ENCODE measurements at regions of chr20 and their contacts with region 1.

Region 1: DNA sequence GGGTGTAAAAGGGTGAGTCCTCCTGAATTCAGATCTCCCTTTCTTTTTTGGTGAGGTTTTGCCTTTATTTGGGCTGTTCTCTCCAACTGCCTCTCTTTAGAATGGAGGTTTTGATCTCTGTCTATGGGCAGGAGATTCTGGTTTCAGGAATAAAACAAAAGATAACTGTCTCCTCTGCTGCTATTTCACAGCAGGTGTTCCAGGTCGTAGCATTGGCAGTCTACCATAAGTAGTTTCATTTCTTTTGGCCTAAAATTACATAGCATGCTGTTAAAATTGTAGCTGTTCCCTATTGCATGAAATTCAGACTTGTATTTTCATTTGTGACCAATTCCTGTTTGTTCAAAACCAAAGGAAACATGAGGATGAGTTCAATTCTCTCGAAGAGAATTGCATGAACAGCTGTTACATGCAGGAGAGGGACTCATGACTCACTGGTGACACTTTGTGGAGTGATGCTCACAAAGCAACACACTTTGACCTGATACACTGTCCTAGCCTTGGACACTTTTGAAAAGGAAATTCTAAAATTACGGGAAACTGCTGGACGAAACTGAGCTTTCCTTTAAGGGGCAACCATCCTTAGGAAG is 76.8 kb upstream of the SIRPG start:
- DNase-seq: peak in 6 of 9 experiments; percentile 7 to 74 (median 36)
- ATAC-seq: peak; percentile 63
- H3K4me3 ChIP-seq: no peak overlapping the region
- H3K4me3 Mint-ChIP-seq: no peak overlapping the region
- H3K27ac ChIP-seq: no peak overlapping the region
- H3K27ac Mint-ChIP-seq: peak overlapping the region; percentile 75
- H3K4me1 ChIP-seq: peaks cover 31% of the 10 kb centered on the region
- H3K4me1 Mint-ChIP-seq: peaks cover 4% of the 10 kb centered on the region
- H3K27me3 ChIP-seq: no peaks in the 10 kb centered on the region
- H3K27me3 Mint-ChIP-seq: no peaks in the 10 kb centered on the region
- CTCF ChIP-seq: peak; percentile 50

Region 2: DNA sequence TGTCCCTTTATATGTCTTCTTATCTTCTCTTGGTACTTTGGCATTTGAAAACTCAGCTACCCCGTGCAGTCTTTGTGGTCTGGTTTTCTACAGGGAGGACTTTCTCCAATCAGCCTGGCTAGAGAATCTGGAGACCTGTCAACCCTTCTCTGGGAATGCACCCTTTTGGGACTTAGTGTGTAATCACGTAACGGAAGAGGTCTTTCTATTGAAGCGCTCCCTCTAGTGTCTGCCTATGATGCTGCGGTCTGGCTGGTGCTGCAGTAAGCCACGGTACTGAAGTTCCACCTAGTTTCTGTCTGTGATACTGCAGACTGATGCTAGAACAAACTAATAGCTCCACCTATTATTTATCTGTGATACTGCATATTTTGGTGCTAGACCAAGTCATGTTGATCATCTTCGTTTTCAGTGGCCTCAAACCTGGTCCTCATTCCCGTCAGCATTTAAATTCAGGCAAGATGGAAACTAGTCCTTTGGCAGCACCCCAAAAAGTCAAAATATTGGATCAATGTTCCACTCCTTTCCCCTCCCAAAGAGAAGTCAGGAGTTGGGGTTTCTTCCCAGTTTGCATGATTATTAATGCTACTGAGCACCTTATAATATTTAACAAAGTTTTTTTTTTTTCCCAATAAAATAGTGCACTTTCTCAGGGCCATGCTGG is 230.7 kb before region 1 on chr20:
- CTCF ChIA-PET with region 1: interaction called, 62 read pairs
- POLR2A ChIA-PET with region 1: no interaction called
- intact Hi-C with region 1: no loop called
- DNase-seq: peak; percentile 54 to 91 (median 73)
- ATAC-seq: peak; percentile 100
- H3K4me3 ChIP-seq: no peak overlapping the region
- H3K4me3 Mint-ChIP-seq: no peak overlapping the region
- H3K27ac ChIP-seq: no peak overlapping the region
- H3K27ac Mint-ChIP-seq: no peak overlapping the region
- H3K4me1 ChIP-seq: peaks cover 3% of the 10 kb centered on the region
- H3K4me1 Mint-ChIP-seq: peaks cover 5% of the 10 kb centered on the region
- H3K27me3 ChIP-seq: no peaks in the 10 kb centered on the region
- H3K27me3 Mint-ChIP-seq: peaks cover 30% of the 10 kb centered on the region
- CTCF ChIP-seq: peak; percentile 99

Region 3: GRCh38 chr20:1535420-1536175 is 198.8 kb before region 1 on chr20:
- CTCF ChIA-PET with region 1: interaction called, 29 read pairs
- POLR2A ChIA-PET with region 1: no interaction called
- intact Hi-C with region 1: loop called in 1 of 2 experiments (anchors 1 kb)
- DNase-seq: no peak
- ATAC-seq: no peak
- H3K4me3 ChIP-seq: no peak overlapping the region
- H3K4me3 Mint-ChIP-seq: no peak overlapping the region
- H3K27ac ChIP-seq: no peak overlapping the region
- H3K27ac Mint-ChIP-seq: no peak overlapping the region
- H3K4me1 ChIP-seq: no peaks in the 10 kb centered on the region
- H3K4me1 Mint-ChIP-seq: peaks cover 7% of the 10 kb centered on the region
- H3K27me3 ChIP-seq: no peaks in the 10 kb centered on the region
- H3K27me3 Mint-ChIP-seq: peaks cover 2% of the 10 kb centered on the region
- CTCF ChIP-seq: no peak

Region 4: GRCh38 chr20:1562622-1563021 is 171.7 kb before region 1 on chr20:
- CTCF ChIA-PET with region 1: interaction called, 21 read pairs
- POLR2A ChIA-PET with region 1: no interaction called
- intact Hi-C with region 1: no loop called
- DNase-seq: no peak
- ATAC-seq: no peak
- H3K4me3 ChIP-seq: no peak overlapping the region
- H3K4me3 Mint-ChIP-seq: no peak overlapping the region
- H3K27ac ChIP-seq: no peak overlapping the region
- H3K27ac Mint-ChIP-seq: no peak overlapping the region
- H3K4me1 ChIP-seq: no peaks in the 10 kb centered on the region
- H3K4me1 Mint-ChIP-seq: peaks cover 11% of the 10 kb centered on the region
- H3K27me3 ChIP-seq: no peaks in the 10 kb centered on the region
- H3K27me3 Mint-ChIP-seq: no peaks in the 10 kb centered on the region
- CTCF ChIP-seq: no peak

Region 5: DNA sequence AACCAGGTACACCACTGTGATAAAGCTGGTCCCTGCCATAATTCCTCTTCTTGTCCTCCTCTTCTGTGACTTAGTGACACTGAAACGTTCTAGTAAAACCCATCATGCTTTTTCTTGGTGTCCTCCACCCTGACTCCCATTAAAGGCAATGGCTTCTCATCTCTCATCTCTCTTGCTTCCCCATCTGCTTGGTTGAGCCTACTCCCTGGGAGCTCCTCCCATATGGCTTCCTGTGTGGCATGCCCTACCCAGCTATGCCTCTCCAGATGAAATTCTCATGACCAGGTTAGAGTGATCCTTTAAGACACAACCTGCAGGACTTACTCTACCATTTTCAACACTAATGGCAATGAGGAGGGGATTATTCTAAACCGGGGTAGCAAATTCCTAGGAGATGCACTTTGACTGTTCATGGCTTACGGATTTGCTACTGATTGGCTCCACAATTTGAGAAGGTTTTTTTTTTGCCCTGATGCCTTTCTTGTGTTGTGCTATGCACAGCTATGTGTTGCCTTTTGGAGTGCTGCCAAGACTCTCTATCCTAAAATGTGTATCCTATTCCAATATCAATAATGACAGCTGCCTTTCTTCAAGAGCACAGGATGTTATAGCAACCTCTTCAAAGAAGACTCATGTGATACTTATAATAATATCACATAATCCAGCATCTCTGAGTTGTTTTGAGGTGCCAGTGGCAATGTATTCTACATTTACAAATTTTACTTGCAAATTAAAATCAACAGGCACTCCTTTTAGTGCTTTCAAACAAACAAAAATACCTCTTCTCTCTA is 82.9 kb before region 1 on chr20:
- CTCF ChIA-PET with region 1: interaction called, 13 read pairs
- POLR2A ChIA-PET with region 1: no interaction called
- intact Hi-C with region 1: loop called in 1 of 2 experiments (anchors 5 kb)
- DNase-seq: peak in 2 of 9 experiments; percentile 29 to 49
- ATAC-seq: no peak
- H3K4me3 ChIP-seq: peak overlapping the region in 1 of 2 experiments; percentile 12
- H3K4me3 Mint-ChIP-seq: peak overlapping the region; percentile 64
- H3K27ac ChIP-seq: peak overlapping the region in 1 of 2 experiments; percentile 51
- H3K27ac Mint-ChIP-seq: peak overlapping the region; percentile 88
- H3K4me1 ChIP-seq: peaks cover 83% of the 10 kb centered on the region
- H3K4me1 Mint-ChIP-seq: peaks cover 86% of the 10 kb centered on the region
- H3K27me3 ChIP-seq: no peaks in the 10 kb centered on the region
- H3K27me3 Mint-ChIP-seq: no peaks in the 10 kb centered on the region
- CTCF ChIP-seq: no peak

Region 6: DNA sequence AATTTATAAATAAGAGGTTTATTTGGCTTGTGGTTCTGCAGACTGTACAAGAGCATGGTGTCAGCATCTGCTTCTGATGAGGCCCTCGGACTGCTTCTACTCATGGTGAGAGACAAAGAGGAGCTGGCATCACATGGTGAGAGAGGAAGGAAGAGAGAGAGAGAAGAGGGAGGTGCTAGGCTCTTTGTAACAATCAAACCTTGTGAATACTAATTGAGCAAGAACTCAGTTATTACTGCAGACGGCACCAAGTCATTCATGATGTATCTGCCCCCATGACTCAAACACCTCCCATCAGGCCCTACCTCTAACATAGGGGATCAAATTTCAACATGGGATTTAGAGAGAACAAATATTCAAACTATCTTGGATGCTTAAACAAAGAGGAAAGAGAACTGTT is 70.4 kb before region 1 on chr20:
- CTCF ChIA-PET with region 1: interaction called, 21 read pairs
- POLR2A ChIA-PET with region 1: interaction called, 3 read pairs
- intact Hi-C with region 1: loop called in 1 of 2 experiments (anchors 5 kb)
- DNase-seq: peak in 3 of 9 experiments; percentile 34 to 58 (median 48)
- ATAC-seq: peak; percentile 34
- H3K4me3 ChIP-seq: peak overlapping the region in 1 of 2 experiments; percentile 13
- H3K4me3 Mint-ChIP-seq: peak overlapping the region; percentile 75
- H3K27ac ChIP-seq: peak overlapping the region in 1 of 2 experiments; percentile 69
- H3K27ac Mint-ChIP-seq: peak overlapping the region; percentile 91
- H3K4me1 ChIP-seq: peaks cover 93% of the 10 kb centered on the region
- H3K4me1 Mint-ChIP-seq: peaks cover 95% of the 10 kb centered on the region
- H3K27me3 ChIP-seq: no peaks in the 10 kb centered on the region
- H3K27me3 Mint-ChIP-seq: no peaks in the 10 kb centered on the region
- CTCF ChIP-seq: no peak

Region 7: GRCh38 chr20:1764136-1765033 is 30.0 kb after region 1 on chr20:
- CTCF ChIA-PET with region 1: interaction called, 12 read pairs
- POLR2A ChIA-PET with region 1: no interaction called
- intact Hi-C with region 1: no loop called
- DNase-seq: peak; percentile 30 to 73 (median 57)
- ATAC-seq: peak; percentile 75
- H3K4me3 ChIP-seq: no peak overlapping the region
- H3K4me3 Mint-ChIP-seq: no peak overlapping the region
- H3K27ac ChIP-seq: no peak overlapping the region
- H3K27ac Mint-ChIP-seq: no peak overlapping the region
- H3K4me1 ChIP-seq: no peaks in the 10 kb centered on the region
- H3K4me1 Mint-ChIP-seq: no peaks in the 10 kb centered on the region
- H3K27me3 ChIP-seq: no peaks in the 10 kb centered on the region
- H3K27me3 Mint-ChIP-seq: peaks cover 2% of the 10 kb centered on the region
- CTCF ChIP-seq: peak; percentile 88

Measured in CD8-positive, alpha-beta T cell (primary cell).